AG04449 (cell line): ENCODE measurements at regions of chr2 and their contacts with region 1.

Region 1: GRCh38 chr2:70861777-70862625 is 26.4 kb upstream of the CD207 start:
- DNase-seq: no peak
- H3K4me3 ChIP-seq: no peak overlapping the region
- CTCF ChIP-seq: peak; percentile 98

Region 2: DNA sequence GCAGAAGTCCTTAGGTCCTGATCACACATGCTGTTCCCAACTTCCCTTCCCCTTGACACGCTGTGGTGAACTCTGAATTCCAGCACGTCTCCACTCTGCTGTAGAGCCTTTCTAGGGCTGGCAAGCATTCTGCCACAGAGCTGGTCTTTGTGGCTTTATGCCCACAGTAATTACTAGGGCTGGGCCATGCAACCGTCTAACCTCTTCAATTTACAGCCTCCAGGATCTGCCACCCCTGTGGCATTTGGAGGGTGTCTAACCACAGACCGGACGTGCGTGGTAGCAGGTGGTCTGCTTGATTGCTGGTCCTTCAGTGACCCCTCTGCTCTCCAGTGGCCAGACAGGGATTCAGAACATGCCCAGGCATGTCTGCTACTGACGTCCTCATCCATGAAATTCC is 265.3 kb before region 1 on chr2:
- CTCF ChIA-PET with region 1: no interaction called
- POLR2A ChIA-PET with region 1: no interaction called
- DNase-seq: no peak
- H3K4me3 ChIP-seq: no peak overlapping the region
- CTCF ChIP-seq: no peak

Region 3: GRCh38 chr2:70851704-70852103 is 10.3 kb before region 1 on chr2:
- CTCF ChIA-PET with region 1: interaction called, 14 read pairs
- POLR2A ChIA-PET with region 1: no interaction called
- DNase-seq: no peak
- H3K4me3 ChIP-seq: no peak overlapping the region
- CTCF ChIP-seq: no peak

Region 4: DNA sequence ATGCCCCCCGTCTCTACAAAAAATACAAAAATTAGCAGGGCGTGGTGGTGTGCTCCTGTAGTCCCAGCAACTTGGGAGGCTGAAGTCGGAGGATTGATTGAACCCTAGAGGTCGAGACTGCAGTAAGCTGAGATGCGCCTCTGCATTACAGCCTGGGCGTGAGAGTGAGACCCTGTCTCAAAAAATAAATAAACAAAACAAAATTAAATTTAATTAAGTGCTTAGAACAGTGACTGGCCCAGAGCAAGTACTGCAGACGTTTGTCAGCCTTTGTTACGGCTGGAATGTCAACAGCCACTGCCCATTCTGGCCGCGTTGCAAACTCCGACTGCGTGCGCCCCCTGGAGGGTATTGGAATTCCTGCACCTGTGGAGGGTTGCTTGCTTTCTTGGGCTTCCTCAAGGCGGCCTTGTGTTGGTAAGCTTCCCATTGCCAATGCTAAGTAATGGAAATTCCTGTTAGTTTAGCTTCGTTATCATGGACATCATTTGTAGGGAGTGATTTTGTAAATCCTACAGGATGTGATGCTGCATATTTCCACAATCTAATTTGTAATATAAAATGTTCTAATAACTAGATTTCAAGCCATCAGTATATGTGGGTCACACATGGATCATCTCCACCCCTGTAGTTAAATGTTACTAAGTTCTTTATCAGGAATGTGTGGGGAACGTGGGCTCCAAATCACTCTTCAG is 57.8 kb after region 1 on chr2:
- CTCF ChIA-PET with region 1: interaction called, 166 read pairs
- POLR2A ChIA-PET with region 1: no interaction called
- DNase-seq: no peak
- H3K4me3 ChIP-seq: no peak overlapping the region
- CTCF ChIP-seq: peak; percentile 94

Region 5: DNA sequence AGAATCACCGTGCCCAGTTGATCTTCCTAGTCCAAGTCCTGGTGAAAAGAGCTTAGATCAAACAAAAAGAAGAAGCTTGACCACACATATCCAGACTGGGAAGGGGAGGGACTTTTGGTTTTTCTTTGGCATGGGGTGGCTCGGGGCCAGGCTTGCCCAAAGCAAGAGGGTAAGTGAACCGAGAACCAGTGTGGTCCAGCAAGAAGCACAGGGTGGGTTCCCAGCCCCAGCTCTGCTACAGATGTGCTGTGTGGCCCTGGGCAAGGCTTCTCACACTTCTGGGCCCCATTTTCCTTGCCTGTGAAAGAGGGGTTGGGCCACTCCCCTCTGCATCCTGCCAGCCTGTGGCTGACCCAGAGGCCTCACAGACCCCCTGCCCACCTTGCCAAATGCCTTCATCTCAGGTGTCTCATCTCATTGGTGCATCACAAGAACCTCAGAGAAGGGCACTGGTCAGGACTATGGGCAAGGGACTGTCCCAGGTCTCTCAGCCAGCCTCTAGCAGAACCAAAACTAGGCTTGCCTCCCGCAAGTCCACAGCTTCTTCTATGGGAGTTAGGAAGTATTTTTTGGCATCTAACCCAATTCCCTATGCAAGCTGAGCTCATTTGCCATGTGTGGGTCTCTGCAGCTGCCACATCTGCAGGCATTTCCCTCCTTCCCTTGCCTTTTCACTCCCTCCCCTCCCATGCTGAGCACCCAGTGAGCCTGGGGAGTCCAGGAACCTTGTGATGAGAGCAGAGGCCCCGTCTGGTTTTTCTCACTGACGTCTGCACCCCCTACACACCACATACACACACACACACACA is 80.6 kb after region 1 on chr2:
- CTCF ChIA-PET with region 1: interaction called, 299 read pairs
- POLR2A ChIA-PET with region 1: no interaction called
- DNase-seq: no peak
- H3K4me3 ChIP-seq: no peak overlapping the region
- CTCF ChIP-seq: no peak

Region 6: DNA sequence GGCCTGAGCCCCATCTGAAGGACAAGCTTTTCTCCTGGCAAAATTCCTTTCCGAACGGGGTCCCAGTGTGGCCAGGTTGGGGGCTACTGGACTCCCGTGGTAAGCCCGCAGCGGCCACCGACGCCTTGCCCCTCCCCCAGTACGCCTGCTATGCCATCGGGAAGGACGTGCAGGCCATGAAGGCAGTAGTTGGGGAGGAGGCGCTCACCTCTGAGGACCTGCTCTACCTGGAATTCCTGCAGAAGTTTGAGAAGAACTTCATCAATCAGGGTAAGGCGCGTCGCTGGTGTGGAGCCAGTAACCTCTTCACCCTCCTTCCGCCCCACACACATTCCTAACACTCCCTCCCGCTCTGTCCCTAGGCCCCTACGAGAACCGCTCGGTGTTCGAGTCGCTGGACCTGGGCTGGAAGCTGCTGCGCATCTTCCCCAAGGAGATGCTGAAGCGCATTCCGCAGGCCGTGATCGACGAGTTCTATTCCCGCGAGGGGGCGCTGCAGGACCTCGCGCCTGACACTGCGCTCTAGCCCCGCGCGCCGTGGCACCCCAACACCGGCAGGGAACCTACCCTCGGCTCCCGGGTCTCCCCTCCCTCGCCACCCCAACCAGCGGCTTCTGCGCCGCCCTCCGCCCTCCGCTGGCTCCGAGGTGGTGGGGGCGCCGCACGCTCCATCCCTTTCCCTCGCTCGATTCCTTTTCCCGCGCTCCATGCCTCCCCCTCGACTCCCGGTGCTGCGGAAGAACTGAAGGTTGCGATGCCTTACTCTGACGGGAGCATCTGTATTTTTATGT is 102.8 kb after region 1 on chr2:
- CTCF ChIA-PET with region 1: interaction called, 20 read pairs
- POLR2A ChIA-PET with region 1: no interaction called
- DNase-seq: no peak
- H3K4me3 ChIP-seq: peak overlapping the region; percentile 60
- CTCF ChIP-seq: peak; percentile 89

Region 7: GRCh38 chr2:70977605-70978205 is 115.7 kb after region 1 on chr2:
- CTCF ChIA-PET with region 1: interaction called, 17 read pairs
- POLR2A ChIA-PET with region 1: no interaction called
- DNase-seq: peak; percentile 21
- H3K4me3 ChIP-seq: peak overlapping the region; percentile 61
- CTCF ChIP-seq: no peak